CD4-positive, alpha-beta T cell (primary cell): ENCODE measurements at regions of chr2 and their contacts with region 1.

Region 1: DNA sequence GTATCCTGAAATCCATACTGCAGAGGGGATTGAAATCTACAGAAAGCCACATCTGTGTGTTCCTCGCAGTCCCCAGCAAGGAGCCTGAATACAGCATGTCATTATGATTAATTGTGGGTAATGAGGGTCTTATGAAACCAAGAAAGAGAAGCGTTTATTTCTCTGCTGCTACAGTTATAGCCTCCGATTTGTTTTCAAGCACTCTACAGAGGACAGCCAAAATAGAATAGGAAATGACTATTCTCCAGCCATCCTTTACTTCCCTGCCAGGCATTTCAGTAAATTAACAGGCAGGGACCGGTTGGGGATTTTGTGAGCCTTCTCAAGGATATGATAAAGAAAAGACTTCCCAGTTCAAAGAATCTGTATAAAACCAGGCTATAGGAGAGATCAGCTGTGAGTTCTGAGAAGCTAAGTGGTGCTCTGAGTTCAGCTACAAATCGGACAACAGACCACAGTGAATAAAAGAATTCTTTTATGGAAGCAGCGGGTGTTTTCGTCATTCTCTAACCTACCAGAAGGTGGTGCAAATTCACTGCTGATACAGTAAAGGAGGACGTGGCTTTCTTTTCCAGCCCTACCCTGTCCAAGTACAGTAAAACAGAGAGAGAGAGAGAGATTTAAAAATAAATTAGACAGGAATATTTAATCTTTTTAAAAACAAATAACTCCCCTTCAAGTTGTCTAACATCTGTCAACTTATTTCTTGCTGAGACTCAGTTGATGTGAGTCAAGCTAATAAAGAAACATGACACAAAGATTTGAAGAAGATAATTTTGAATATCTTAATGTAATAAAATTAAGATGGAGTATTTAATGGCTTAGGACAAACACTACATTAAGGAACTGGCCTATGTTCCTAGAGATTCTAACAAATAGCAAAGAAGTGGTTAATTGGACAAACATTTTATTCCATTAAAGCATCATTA is 133.7 kb downstream of the INSIG2 start:
- DNase-seq: peak in 9 of 14 experiments; percentile 6 to 77 (median 10)
- ATAC-seq: peak; percentile 75
- H3K4me3 ChIP-seq: no peak overlapping the region
- H3K4me3 Mint-ChIP-seq: peak overlapping the region; percentile 12
- H3K27ac ChIP-seq: no peak overlapping the region
- H3K27ac Mint-ChIP-seq: no peak overlapping the region
- H3K4me1 ChIP-seq: peaks cover 19% of the 10 kb centered on the region
- H3K4me1 Mint-ChIP-seq: peaks cover 28% of the 10 kb centered on the region
- H3K27me3 ChIP-seq: peaks cover 44 to 70% of the 10 kb centered on the region in 2 experiments
- H3K27me3 Mint-ChIP-seq: peaks cover 78% of the 10 kb centered on the region
- CTCF ChIP-seq: peak; percentile 87

Region 2: DNA sequence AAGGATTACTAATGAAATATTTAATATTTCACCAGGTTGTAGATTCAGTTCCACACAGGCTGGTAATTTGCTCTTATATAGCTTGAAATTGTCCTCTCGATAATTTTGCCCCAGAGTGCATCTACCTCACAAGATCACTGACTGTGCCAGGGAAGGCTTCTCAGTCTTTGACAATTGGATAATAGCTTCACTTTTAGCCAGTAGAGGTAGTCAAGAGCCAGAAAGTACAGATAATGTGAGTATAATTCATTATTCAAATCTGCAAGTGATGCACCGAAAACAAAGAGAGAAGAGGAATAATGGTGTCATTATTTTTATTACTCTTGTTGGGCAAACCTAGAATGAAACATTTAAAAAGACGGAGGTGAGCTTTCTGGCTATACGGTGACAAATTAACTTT is 332.7 kb after region 1 on chr2:
- CTCF ChIA-PET with region 1: no interaction called
- POLR2A ChIA-PET with region 1: no interaction called
- intact Hi-C with region 1: no loop called
- DNase-seq: no peak
- ATAC-seq: no peak
- H3K4me3 ChIP-seq: no peak overlapping the region
- H3K4me3 Mint-ChIP-seq: no peak overlapping the region
- H3K27ac ChIP-seq: no peak overlapping the region
- H3K27ac Mint-ChIP-seq: no peak overlapping the region
- H3K4me1 ChIP-seq: no peaks in the 10 kb centered on the region
- H3K4me1 Mint-ChIP-seq: no peaks in the 10 kb centered on the region
- H3K27me3 ChIP-seq: no peaks in the 10 kb centered on the region
- H3K27me3 Mint-ChIP-seq: peaks cover 2% of the 10 kb centered on the region
- CTCF ChIP-seq: no peak

Region 3: DNA sequence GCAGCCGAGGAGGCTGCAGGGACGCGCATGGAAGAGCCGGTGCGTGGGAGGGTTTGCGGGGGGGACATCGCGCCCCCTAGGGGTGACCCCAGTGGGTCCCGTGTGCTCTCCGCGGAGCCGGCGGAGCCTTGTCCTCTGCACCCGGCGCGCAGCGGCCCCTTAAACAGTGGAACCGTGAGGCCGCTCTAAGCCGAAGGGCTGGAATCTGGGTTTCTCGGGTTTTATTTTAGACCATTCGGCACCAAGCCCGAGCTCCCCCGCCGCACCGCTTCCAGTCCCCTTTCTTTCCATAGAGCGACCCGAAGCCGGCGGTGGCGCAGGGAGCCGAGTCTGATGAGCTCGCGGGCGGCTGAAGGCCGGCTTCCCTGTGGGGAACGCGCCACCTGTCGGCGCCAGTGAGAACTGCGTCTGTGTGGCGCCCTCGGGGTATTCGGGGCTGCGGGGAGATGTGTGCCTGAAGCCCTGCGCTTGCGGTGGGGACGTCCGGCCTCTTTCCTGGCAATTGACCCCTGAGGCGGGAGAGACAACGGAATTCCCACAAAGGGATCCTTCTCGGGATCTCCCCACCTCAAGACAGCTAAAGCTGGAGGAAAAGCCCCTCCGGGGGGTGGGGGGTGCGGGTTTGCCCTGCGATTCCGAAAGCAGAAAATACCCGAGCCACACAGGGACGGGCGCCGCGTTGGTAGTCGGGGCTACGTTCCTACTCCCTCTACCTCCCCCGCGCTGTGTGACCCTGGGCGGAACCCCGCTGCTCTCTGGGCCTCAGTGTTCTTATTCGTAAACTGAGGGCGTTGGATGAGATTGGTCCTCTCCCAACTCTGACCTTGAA is 633.7 kb after region 1 on chr2:
- CTCF ChIA-PET with region 1: interaction called, 11 read pairs
- POLR2A ChIA-PET with region 1: no interaction called
- intact Hi-C with region 1: loop called (anchors 1 kb)
- DNase-seq: peak; percentile 68 to 88 (median 77)
- ATAC-seq: peak; percentile 94
- H3K4me3 ChIP-seq: peak overlapping the region; percentile 42
- H3K4me3 Mint-ChIP-seq: peak overlapping the region; percentile 77
- H3K27ac ChIP-seq: no peak overlapping the region
- H3K27ac Mint-ChIP-seq: no peak overlapping the region
- H3K4me1 ChIP-seq: peaks cover 46% of the 10 kb centered on the region
- H3K4me1 Mint-ChIP-seq: peaks cover 30% of the 10 kb centered on the region
- H3K27me3 ChIP-seq: peaks cover 96 to 98% of the 10 kb centered on the region in 2 experiments
- H3K27me3 Mint-ChIP-seq: peaks cover 95% of the 10 kb centered on the region
- CTCF ChIP-seq: peak; percentile 95

Region 4: DNA sequence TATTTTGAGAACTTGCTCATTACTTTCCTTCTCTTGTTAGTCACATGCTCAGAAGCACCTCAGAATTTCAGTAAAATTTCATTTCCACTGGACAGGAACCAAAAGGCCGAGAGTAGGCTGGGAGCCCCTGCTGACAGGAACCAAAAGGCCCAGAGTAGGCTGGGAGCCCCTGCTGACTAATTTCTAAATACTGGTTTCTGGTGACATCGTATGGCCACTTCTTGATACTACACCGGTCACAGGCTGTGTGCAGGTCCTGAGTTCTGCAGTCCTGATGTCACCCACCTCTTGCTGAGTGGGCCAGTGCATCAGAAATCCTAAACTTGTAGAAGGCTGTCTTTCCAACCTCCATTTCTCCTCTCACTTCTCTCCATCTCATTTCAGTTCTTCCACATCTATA is 643.2 kb after region 1 on chr2:
- CTCF ChIA-PET with region 1: interaction called, 3 read pairs
- POLR2A ChIA-PET with region 1: no interaction called
- intact Hi-C with region 1: loop called (anchors 2 kb)
- DNase-seq: peak in 3 of 14 experiments; percentile 34 to 58 (median 56)
- ATAC-seq: peak; percentile 73
- H3K4me3 ChIP-seq: no peak overlapping the region
- H3K4me3 Mint-ChIP-seq: no peak overlapping the region
- H3K27ac ChIP-seq: no peak overlapping the region
- H3K27ac Mint-ChIP-seq: no peak overlapping the region
- H3K4me1 ChIP-seq: no peaks in the 10 kb centered on the region
- H3K4me1 Mint-ChIP-seq: no peaks in the 10 kb centered on the region
- H3K27me3 ChIP-seq: peaks cover 22 to 46% of the 10 kb centered on the region in 2 experiments
- H3K27me3 Mint-ChIP-seq: peaks cover 56% of the 10 kb centered on the region
- CTCF ChIP-seq: peak; percentile 61

Region 5: DNA sequence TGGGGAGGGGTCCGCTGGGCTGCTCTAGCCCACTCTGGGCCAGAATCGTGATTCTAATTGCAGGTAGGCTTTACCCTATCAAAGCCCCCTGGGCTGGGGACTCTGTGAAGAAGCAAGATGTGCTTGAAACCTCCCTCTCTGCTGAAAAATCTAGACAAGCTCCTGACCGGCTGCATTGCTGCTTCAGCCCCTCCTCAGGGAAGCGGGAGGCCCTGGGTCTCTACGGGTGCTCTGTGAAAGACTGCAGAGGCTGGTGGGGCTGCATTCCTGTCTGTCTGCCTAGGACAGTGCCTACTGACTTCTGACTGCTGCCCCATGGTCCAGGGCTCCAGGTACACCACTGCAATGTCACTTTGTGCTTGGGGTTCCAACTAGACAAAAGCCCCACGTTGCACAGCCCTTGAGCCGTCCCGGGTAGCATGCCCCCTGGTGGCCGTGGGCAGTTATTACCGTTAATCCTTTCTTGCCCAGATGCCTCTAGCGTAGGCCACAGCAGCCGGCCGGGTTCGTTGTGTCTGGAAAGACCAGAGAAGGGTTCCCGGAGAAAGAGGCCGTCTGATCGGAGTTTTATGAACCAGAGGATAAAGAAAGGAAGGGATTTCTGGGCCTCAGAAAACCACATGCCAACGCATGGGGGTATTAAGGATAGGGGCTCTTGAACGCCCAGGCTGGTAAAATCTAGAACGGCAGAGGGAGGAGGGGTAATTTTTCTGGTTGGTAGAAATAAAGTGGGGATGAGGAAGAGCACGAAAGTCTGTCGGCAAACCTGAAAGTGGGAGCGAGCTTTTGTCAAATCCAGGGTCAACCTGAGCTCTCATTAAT is 952.5 kb after region 1 on chr2:
- CTCF ChIA-PET with region 1: no interaction called
- POLR2A ChIA-PET with region 1: no interaction called
- intact Hi-C with region 1: loop called in 1 of 2 experiments (anchors 10 kb)
- DNase-seq: peak; percentile 22 to 69 (median 48)
- ATAC-seq: peak; percentile 59
- H3K4me3 ChIP-seq: no peak overlapping the region
- H3K4me3 Mint-ChIP-seq: no peak overlapping the region
- H3K27ac ChIP-seq: no peak overlapping the region
- H3K27ac Mint-ChIP-seq: no peak overlapping the region
- H3K4me1 ChIP-seq: peaks cover 2% of the 10 kb centered on the region
- H3K4me1 Mint-ChIP-seq: no peaks in the 10 kb centered on the region
- H3K27me3 ChIP-seq: no peaks in the 10 kb centered on the region
- H3K27me3 Mint-ChIP-seq: peaks cover under 1% of the 10 kb centered on the region
- CTCF ChIP-seq: peak; percentile 90